Pancreas (tissue), 10 donors: ENCODE measurements at regions of chr16 and their contacts with region 1.

Region 1: DNA sequence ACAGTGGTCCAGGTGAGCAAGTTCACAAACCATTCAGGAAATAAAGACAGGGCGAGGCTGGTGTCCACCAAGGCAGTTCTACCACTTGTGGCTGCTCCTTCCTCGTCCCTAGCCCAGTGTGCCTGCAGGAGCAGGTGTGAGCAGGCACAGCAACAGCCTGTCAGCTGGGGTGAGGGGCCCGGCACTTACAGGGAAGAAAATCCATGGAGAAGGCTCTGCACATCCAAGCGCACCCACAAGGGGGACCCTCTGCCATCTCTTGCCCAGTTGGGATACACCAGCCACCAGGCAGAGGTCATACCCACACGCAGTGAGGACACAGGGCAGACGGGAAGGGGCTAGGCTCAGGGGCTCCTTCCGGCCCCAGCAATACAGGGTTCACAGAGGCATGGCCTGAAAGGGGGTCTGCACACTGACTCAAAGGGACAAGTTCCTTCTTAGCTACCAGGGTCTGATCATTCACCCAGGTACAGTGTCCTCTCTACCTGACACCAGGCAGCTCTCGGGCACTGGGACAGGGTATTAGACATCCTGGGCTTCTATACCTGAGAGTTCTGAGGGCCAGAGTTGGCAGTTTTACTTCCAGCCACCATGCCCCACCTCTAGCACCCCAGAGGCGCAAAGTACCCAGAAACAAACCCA is 27.0 kb downstream of the CDIP1 start:
- DNase-seq: peak; percentile 62 to 87 (median 75)
- ATAC-seq: peak; percentile 71 to 85 (median 82)
- H3K4me3 ChIP-seq: no peak overlapping the region
- H3K27ac ChIP-seq: peak overlapping the region in 1 of 4 donors; percentile 19
- H3K4me1 ChIP-seq: peaks cover 0 to 10% (median 0%) of the 10 kb centered on the region in 3 donors
- H3K27me3 ChIP-seq: no peaks in the 10 kb centered on the region
- CTCF ChIP-seq: peak; percentile 32 to 49 (median 40)

Region 2: DNA sequence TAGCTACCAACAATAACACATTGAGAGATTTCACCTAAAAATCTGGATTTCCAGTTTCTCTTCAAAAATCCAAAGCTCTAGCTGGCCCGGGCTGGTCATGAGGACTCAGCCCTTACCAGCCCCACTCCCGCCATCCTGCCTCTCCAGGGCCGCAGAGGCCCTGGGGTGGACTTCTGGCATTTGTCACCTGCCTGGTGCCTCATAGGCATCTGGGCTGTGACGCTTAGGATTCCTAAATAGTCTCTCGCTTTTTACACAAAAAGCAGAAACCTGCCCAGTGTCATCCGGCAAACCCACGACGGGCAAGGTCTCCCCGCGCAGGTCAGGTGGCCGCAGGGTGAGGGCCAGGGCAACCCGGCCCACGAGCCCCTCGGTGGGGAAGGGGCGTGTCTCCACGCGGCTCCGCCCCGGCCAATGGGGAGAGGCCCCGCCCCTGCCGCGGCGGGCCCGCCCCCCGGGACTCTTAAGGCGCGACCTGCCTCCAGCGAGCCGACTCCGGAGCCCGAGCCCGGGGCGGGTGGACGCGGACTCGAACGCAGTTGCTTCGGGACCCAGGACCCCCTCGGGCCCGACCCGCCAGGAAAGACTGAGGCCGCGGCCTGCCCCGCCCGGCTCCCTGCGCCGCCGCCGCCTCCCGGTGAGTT is 140.1 kb before region 1 on chr16 and contains the start of gene VASN:
- intact Hi-C with region 1: no loop called
- DNase-seq: peak; percentile 70 to 94 (median 85)
- ATAC-seq: peak; percentile 70 to 79 (median 73)
- H3K4me3 ChIP-seq: peak within 1 kb of the TSS; percentile 46 to 67 (median 58)
- H3K27ac ChIP-seq: peak within 1 kb of the TSS; percentile 69 to 92 (median 82)
- H3K4me1 ChIP-seq: peaks cover 0 to 19% (median 18%) of the 10 kb centered on the region in 3 donors
- H3K27me3 ChIP-seq: no peaks in the 10 kb centered on the region
- CTCF ChIP-seq: no peak
- total RNA-seq, gene VASN: 3.1 to 10.1 (median 7.9) TPM

Region 3: DNA sequence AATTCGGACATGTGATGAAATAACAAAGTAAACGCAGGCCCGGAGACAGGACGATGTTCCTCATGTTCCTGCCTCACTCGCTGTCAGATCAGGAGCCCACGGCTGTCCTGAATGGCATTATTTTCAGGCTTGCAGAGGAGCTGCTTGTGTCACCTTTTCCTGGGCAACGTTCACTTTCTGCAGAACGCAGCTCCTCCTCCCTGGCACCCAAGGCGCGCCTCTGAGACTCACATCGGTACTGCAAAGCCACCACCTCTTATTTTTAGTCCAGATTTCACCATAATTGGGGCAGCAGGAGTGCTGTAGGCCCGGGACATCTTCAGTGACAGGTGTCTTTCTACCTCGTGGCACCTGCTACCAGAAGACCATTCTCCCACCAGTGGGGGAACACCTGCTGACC is 36.6 kb after region 1 on chr16:
- intact Hi-C with region 1: loop called in 1 of 3 experiments (anchors 5 kb)
- DNase-seq: no peak
- ATAC-seq: peak; percentile 7 to 33 (median 20)
- H3K4me3 ChIP-seq: no peak overlapping the region
- H3K27ac ChIP-seq: no peak overlapping the region
- H3K4me1 ChIP-seq: no peaks in the 10 kb centered on the region
- H3K27me3 ChIP-seq: no peaks in the 10 kb centered on the region
- CTCF ChIP-seq: no peak

Region 4: DNA sequence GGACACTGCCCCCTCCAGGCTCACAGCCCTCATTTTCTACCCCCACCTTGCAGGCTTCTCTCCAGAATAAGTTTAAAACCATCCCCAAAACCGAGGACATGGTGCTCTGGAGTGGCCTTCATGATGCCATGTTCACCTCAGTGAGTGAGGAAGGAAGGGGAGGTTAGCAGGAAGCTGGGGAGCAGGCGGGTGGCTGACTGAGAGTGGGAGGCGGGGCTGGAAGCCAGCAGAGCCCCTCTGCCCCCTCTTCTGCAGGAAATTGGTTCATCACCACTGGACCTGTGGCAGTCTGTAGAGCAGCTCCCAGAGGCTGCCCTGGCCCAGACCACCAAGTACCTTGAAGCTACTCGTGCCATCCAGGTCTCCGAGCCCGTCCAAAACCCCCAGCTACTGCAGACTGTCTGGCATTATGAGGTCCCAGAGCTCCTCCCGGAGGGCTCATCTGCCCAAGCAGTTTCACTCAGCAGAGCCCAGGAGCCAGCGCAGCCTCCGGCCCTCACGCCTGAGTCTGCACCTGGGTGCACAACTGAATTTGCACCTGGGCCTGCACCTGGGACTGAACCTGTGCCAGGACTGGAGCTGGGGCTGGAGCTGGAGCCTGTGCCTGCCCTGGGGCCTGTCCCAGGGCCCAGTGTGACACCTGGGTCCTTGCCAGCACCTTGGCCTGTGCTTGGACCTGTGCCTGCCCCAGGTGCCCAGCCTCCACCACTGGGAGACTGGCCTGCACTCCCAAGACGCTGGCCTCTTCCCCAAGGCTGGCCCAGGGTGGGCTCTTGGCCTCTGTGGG is 63.5 kb after region 1 on chr16:
- intact Hi-C with region 1: loop called in 2 of 3 experiments (anchors 10 kb)
- DNase-seq: peak; percentile 72 to 93 (median 84)
- ATAC-seq: peak; percentile 86 to 96 (median 91)
- H3K4me3 ChIP-seq: no peak overlapping the region
- H3K27ac ChIP-seq: no peak overlapping the region
- H3K4me1 ChIP-seq: no peaks in the 10 kb centered on the region
- H3K27me3 ChIP-seq: no peaks in the 10 kb centered on the region
- CTCF ChIP-seq: no peak

Region 5: DNA sequence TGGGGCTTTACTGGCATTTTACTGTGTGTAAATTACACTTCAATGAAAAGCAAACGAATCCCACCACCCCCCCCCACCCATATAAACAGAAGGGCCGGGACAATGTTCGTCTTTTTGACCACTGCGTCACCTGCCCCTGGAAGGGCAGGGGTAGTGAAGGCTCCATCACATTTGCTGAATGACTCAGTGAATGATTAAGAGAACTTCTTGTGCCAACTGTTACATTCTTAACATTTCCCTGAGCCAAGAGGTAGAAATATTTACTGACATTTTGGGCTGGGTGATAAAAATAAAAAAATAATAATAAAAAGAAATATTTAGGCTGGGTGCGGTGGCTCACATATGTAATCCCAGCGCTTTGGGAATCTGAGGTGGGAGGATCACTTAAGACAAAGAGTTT is 68.7 kb after region 1 on chr16:
- intact Hi-C with region 1: loop called in 2 of 3 experiments (anchors 10 kb)
- DNase-seq: no peak
- ATAC-seq: peak in 2 of 4 donors; percentile 23 to 45
- H3K4me3 ChIP-seq: no peak overlapping the region
- H3K27ac ChIP-seq: no peak overlapping the region
- H3K4me1 ChIP-seq: no peaks in the 10 kb centered on the region
- H3K27me3 ChIP-seq: no peaks in the 10 kb centered on the region
- CTCF ChIP-seq: no peak